Left ventricle myocardium superior (tissue), 1 donor: ENCODE measurements at regions of chr13 and their contacts with region 1.

Region 1: DNA sequence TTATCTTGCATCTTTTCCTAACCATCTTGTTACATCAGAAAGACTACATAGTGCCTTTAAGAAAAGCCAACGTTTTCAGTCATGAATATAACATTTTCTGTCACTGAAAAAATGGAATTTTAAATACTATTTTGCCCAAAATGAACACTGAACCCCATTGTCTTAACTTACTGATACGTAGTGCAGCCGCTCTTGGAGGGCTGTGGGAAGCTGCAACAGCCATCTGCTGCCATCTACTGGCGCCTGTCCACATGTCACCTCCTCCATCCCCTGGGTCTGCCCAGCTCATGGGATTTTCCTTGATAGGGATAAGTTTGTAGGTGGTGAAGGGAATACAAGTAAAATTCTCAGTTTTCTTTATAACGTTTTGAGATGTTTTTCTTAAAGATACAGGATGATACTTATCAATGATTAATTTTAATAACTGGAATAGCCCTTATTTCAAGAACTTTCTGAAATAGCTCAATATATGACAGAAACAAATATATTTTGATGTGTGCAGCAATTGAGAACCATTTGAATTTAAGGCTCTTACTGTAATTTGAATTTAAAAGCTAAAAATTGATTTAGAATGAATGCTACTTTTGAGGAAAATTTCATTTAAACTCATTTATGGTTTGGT is 73.7 kb downstream of the GGACT start:
- DNase-seq: peak; percentile 87
- ATAC-seq: peak; percentile 93

Region 2: DNA sequence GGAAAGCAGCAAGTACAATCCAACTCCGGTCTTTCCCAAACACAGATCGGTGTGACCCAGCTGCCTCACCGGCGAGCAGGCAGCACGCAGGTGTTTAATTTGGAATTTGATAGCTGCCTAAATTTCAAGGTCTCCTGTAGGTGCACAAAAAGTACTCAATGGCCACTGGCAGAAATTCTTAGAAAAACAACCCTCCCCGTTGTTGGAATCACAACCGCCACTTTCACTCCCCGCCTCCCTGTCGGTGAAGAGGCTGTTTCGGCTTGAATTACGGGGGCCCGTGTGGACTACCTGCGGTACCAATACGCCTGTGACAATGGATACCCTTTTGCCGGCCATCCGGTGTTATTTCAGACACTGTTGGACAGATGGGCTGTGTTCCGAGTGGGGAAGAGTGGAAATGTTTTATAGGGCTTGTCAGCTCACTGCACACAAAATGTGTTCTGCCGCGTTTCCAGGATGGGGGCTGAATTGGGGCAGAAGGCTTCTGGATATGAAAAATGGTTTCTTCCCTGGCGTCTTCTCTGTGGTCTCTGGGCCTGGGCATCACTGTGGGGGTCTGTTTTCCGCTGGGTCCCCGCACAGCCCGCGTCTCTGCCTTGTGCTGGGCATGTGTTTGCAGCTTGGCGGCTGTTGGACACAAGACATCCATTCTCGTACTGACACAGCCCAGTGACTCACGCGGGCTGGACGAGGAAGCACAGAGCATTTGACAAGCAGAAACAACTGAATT is 588.7 kb before region 1 on chr13:
- intact Hi-C with region 1: loop called (anchors 10 kb)
- DNase-seq: no peak
- ATAC-seq: no peak